ENCODE measurements at regions of chr6 and their contacts with region 1.

Region 1: GRCh38 chr6:100479179-100480035 is 14.7 kb upstream of the SIM1 start:
- DNase-seq: peak in 1 of 2 donors; percentile 49
- ATAC-seq: no peak
- H3K4me3 ChIP-seq: no peak overlapping the region
- H3K4me3 Mint-ChIP-seq: no peak overlapping the region
- H3K27ac ChIP-seq: no peak overlapping the region
- H3K27ac Mint-ChIP-seq: no peak overlapping the region
- H3K4me1 ChIP-seq: no peaks in the 10 kb centered on the region
- H3K4me1 Mint-ChIP-seq: no peaks in the 10 kb centered on the region
- H3K27me3 ChIP-seq: no peaks in the 10 kb centered on the region
- H3K27me3 Mint-ChIP-seq: peaks cover 18 to 19% of the 10 kb centered on the region in 2 donors
- CTCF ChIP-seq: peak; percentile 60

Region 2: GRCh38 chr6:99868074-99868702 is 611.2 kb before region 1 on chr6:
- intact Hi-C with region 1: loop called (anchors 5 kb)
- DNase-seq: peak; percentile 28 to 78
- ATAC-seq: peak in 1 of 3 donors; percentile 68
- H3K4me3 ChIP-seq: no peak overlapping the region
- H3K4me3 Mint-ChIP-seq: no peak overlapping the region
- H3K27ac ChIP-seq: no peak overlapping the region
- H3K27ac Mint-ChIP-seq: no peak overlapping the region
- H3K4me1 ChIP-seq: no peaks in the 10 kb centered on the region
- H3K4me1 Mint-ChIP-seq: no peaks in the 10 kb centered on the region
- H3K27me3 ChIP-seq: peaks cover 8% of the 10 kb centered on the region
- H3K27me3 Mint-ChIP-seq: peaks cover 16 to 22% of the 10 kb centered on the region in 2 donors
- CTCF ChIP-seq: peak; percentile 50

Region 3: DNA sequence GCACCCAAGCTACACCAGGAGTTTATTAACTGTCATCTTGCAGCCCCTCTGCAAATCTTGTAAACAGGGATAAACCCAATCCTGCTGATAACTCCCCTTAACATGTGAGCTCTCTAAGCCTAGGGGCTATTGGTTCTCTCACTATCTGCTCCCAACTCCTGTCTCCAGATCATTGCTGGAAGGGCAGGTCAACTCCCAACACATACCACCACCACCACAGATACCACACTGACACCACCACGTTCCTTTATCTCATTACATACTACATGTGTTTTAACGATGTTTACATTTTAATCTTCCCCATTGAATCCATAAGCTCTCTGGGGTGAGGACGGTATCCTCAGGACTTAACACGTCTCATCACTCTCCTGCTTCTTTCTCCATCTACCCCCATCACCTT is 66.5 kb before region 1 on chr6:
- intact Hi-C with region 1: no loop called
- DNase-seq: no peak
- ATAC-seq: no peak
- H3K4me3 ChIP-seq: no peak overlapping the region
- H3K4me3 Mint-ChIP-seq: no peak overlapping the region
- H3K27ac ChIP-seq: no peak overlapping the region
- H3K27ac Mint-ChIP-seq: no peak overlapping the region
- H3K4me1 ChIP-seq: no peaks in the 10 kb centered on the region
- H3K4me1 Mint-ChIP-seq: no peaks in the 10 kb centered on the region
- H3K27me3 ChIP-seq: peaks cover 3% of the 10 kb centered on the region
- H3K27me3 Mint-ChIP-seq: no peaks in the 10 kb centered on the region
- CTCF ChIP-seq: no peak

Region 4: DNA sequence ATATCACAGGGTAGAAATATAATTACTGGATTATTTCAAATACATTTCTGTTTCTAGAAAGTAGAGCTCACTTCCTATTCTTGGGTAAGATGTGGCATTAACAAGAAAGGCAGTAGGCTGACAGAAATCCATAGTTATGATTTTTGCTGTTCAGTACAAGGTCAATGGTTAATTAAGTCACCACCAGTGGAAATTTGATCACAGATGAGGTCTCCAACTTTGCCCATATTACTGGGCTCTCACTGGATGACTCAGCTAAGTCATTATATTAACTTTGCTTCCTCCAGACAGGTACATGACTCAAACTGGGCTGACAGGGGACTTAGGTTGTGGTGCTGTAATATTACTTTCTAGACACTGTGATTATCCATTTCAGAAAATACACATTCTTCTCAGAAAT is 1126.5 kb after region 1 on chr6:
- intact Hi-C with region 1: no loop called
- DNase-seq: no peak
- ATAC-seq: no peak
- H3K4me3 ChIP-seq: no peak overlapping the region
- H3K4me3 Mint-ChIP-seq: no peak overlapping the region
- H3K27ac ChIP-seq: no peak overlapping the region
- H3K27ac Mint-ChIP-seq: no peak overlapping the region
- H3K4me1 ChIP-seq: no peaks in the 10 kb centered on the region
- H3K4me1 Mint-ChIP-seq: no peaks in the 10 kb centered on the region
- H3K27me3 ChIP-seq: no peaks in the 10 kb centered on the region
- H3K27me3 Mint-ChIP-seq: no peaks in the 10 kb centered on the region
- CTCF ChIP-seq: no peak

Measured in natural killer cell (primary cell).